WTC11 (cell line): ENCODE measurements at regions of chr7 and their contacts with region 1.

Region 1: DNA sequence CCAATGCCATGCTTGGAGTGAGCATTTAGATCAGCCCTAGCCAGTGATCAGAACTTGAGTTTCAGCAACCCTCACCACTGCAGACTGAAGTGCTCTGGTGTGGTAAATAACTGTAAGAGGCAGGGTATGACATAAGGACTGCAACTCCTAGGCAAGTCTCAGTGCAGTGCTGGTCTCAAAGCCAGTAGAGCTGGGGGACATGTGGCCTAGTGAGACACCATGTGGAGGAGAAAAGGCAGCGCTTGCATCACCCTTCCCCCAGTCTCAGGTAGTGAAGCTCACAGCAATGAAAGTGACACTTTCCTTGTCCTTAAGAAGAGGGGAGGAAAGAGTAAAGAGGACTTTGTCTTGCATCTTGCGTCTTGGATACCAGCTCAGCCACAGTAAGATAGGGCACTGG is 386.8 kb upstream of the POT1 start:
- DNase-seq: peak; percentile 63
- ATAC-seq: peak; percentile 100
- H3K4me3 Mint-ChIP-seq: no peak overlapping the region
- H3K27ac Mint-ChIP-seq: no peak overlapping the region
- H3K4me1 Mint-ChIP-seq: peaks cover 12% of the 10 kb centered on the region
- H3K27me3 Mint-ChIP-seq: peaks cover 16% of the 10 kb centered on the region
- CTCF ChIP-seq: 0 out of 2 replicates have a peak, but pooled peaks have one; percentile 12

Region 2: GRCh38 chr7:125059861-125060456 is 256.5 kb before region 1 on chr7:
- CTCF ChIA-PET with region 1: interaction called, 10 read pairs
- POLR2A ChIA-PET with region 1: no interaction called
- DNase-seq: no peak
- ATAC-seq: no peak
- H3K4me3 Mint-ChIP-seq: no peak overlapping the region
- H3K27ac Mint-ChIP-seq: no peak overlapping the region
- H3K4me1 Mint-ChIP-seq: peaks cover 12% of the 10 kb centered on the region
- H3K27me3 Mint-ChIP-seq: peaks cover 3% of the 10 kb centered on the region; the same call in 1 of the 2 replicates
- CTCF ChIP-seq: no peak